Cardiac septum (tissue), 1 donor: ENCODE measurements at regions of chr5 and their contacts with region 1.

Region 1: GRCh38 chr5:43105369-43106289 is 15.1 kb upstream of the ZNF131 start:
- DNase-seq: peak; percentile 94

Region 2: GRCh38 chr5:43066799-43067741 is 38.6 kb before region 1 on chr5:
- intact Hi-C with region 1: loop called (anchors 5 kb)
- DNase-seq: peak; percentile 95

Region 3: DNA sequence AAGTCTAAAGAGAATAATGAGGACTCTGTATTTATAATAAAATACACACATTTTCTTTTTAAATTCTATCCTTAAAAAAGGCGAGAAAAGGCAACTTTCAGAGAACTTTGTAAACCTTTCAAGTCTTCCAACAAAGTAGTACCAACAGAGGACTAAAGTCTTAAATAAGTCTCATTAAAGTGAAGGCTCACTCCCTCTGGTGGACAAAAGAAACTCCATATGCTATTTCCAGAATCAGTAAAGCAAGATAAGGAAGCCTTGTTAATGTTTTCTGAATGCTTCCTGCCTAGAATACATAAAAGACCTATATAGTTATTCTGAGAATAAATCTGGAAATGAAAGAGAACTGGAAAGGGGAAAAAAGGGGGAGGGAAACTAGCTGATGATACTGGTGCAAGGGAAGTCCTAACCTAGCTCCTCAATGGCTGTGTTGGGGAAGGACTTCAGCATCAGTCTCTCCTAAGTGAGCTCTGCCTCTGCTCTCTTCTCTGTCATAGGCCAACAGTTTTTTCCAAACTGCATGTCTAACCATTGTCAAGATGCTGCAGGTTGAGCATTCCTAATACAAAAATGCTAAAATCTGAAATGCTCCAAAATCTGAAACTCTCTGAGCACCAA is 200.4 kb after region 1 on chr5:
- intact Hi-C with region 1: loop called (anchors 2 kb)
- DNase-seq: no peak

Region 4: DNA sequence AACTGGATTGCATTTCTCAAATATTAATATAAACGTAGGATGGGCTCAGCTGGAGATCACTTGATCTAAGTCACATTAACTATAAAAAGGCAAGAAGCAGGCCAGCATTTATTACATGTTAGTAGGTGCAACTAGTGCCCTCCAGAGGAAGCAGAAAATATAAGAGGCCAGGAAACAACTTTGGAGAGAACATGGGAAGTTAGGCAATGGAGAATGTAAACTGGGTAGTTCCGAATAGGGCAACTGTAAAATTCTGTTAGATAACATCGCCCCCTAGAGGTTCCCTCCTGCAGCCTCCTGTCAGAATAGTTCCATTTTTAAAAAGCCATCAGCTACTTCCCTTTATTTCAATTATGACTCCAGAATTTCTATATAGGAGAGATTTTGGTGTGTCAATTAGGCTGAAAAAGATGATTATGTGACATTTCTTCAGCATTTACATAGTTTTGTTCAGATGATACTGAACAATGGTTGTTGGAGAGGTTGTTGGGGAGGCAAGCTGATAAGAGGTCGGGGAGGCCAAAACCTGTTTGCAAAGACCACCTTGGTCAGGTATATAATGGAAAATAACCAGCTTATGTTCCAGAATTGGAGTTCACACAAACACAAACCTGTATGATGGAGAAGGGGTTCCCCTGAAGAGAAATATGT is 284.2 kb after region 1 on chr5:
- intact Hi-C with region 1: loop called (anchors 5 kb)
- DNase-seq: no peak